Activated naive CD4-positive, alpha-beta T cell treated with anti-CD3 and anti-CD28 coated beads for 36 hours (primary cell): ENCODE measurements at regions of chr20 and their contacts with region 1.

Region 1: GRCh38 chr20:25057234-25058050 is 497 bp downstream of the ACSS1 start:
- DNase-seq: peak; percentile 88
- H3K4me3 Mint-ChIP-seq: peak overlapping the region; percentile 71
- H3K27ac Mint-ChIP-seq: peak overlapping the region; percentile 72
- H3K4me1 Mint-ChIP-seq: peaks cover 45% of the 10 kb centered on the region
- H3K27me3 Mint-ChIP-seq: no peaks in the 10 kb centered on the region

Region 2: DNA sequence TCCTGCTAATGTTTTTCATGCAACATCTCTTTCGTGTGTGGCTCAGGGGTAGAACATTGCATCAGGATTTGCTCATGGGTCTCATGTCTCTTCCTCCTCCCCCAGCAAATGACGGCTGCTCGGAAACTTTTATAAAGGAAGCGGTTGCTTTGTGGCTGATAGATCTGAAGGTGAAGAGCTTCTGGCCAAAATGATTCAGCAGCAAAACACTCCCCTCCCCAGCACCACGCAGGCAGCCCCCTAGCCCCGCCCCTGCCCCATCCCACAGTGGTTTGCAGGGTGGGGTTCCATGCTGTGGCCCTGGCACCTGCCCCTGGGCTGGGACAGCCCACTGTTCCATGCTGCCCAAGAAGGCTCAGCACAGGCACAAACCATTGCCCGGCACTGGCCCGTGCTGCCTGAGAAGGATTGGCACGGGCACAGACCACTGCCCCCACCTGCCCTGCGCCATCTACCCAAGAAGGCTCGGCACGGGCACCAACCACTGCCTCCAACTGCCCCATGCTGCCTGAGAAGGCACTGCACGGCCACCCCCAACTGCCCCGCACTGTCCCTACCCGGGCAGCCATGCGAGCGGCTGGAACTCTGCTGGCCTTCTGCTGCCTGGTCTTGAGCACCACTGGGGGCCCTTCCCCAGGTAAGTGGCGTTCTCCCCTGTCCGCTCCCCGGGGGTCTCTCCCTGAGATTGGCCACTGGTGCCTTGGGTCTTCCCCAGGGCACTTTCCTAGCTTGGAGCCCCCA is 108.3 kb before region 1 on chr20 and contains the start of gene CST7:
- CTCF ChIA-PET with region 1: interaction called, 3 read pairs
- intact Hi-C with region 1: loop called (anchors 1 kb)
- DNase-seq: peak; percentile 94
- H3K4me3 Mint-ChIP-seq: peak within 1 kb of the TSS; percentile 72
- H3K27ac Mint-ChIP-seq: peak within 1 kb of the TSS; percentile 96
- H3K4me1 Mint-ChIP-seq: peaks cover 40% of the 10 kb centered on the region
- H3K27me3 Mint-ChIP-seq: no peaks in the 10 kb centered on the region
- total RNA-seq, gene CST7: 37.8 to 43.1 TPM

Region 3: DNA sequence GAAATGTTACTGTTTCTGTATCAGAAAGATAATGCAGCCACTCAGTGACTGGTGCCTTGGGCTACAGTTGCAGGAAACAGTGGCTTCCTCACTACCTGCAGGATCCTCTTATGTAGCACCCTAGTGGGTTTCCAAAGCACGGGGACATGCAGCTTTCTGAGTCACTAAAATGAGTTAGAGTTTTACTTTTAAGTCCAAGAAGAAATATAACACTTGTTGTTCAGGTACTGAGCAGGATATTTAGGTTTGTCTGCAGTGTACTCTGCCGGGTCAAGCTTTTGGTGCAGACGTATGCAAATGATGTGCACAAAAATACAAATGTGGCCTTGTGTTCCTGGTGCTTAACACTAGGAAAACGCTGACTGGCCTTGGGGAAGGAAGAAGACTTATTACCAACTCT is 21.5 kb before region 1 on chr20:
- CTCF ChIA-PET with region 1: interaction called, 3 read pairs
- intact Hi-C with region 1: loop called (anchors 1 kb)
- DNase-seq: peak; percentile 55
- H3K4me3 Mint-ChIP-seq: peak overlapping the region; percentile 23
- H3K27ac Mint-ChIP-seq: peak overlapping the region; percentile 26
- H3K4me1 Mint-ChIP-seq: peaks cover 46% of the 10 kb centered on the region
- H3K27me3 Mint-ChIP-seq: no peaks in the 10 kb centered on the region

Region 4: DNA sequence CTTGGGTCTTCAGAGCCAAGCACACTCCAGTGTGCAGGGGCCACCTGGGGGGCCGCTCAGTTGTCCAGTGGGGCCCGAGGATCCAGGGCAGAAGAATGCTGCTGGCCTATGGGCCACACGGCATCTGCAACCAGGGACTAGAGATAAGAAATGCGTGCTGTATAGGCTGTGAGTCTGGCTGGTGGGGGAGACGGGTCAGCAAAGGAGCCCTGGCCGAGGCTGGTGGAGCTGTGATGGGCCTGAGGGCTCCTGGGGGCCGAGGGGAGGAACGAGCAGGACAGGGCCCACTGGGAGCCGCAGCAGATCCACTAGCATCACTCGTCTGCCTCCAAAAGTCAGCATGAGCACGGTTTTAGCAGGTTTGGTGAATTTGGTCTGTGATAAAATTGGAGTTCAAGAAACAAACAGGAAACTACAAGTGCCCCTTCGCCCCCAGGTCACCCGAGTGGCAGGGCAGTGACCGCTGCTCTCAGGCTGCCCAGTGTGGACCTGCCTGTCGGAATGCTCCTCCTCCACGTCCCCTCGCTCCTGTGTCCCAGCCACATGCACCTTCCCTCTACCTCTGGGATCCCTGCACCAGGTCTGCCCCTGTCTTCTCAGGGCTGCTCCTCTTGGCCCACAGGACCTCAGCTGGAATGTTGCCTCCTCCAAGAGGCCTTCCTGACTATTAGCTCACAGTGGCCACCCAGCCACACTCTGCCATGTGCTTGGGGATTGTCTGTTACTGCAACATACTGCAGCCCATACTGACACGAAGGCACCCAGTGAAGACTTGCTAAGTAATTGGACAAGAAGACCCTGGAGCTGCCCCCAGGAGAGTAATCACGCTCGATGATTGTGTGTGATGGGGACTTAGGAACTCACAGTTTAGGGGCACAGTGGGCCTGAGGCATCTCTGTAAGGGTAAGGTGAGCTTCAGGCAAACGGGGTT is 10.4 kb before region 1 on chr20:
- CTCF ChIA-PET with region 1: no interaction called
- intact Hi-C with region 1: no loop called
- DNase-seq: no peak
- H3K4me3 Mint-ChIP-seq: no peak overlapping the region
- H3K27ac Mint-ChIP-seq: no peak overlapping the region
- H3K4me1 Mint-ChIP-seq: peaks cover 28% of the 10 kb centered on the region
- H3K27me3 Mint-ChIP-seq: no peaks in the 10 kb centered on the region

Region 5: DNA sequence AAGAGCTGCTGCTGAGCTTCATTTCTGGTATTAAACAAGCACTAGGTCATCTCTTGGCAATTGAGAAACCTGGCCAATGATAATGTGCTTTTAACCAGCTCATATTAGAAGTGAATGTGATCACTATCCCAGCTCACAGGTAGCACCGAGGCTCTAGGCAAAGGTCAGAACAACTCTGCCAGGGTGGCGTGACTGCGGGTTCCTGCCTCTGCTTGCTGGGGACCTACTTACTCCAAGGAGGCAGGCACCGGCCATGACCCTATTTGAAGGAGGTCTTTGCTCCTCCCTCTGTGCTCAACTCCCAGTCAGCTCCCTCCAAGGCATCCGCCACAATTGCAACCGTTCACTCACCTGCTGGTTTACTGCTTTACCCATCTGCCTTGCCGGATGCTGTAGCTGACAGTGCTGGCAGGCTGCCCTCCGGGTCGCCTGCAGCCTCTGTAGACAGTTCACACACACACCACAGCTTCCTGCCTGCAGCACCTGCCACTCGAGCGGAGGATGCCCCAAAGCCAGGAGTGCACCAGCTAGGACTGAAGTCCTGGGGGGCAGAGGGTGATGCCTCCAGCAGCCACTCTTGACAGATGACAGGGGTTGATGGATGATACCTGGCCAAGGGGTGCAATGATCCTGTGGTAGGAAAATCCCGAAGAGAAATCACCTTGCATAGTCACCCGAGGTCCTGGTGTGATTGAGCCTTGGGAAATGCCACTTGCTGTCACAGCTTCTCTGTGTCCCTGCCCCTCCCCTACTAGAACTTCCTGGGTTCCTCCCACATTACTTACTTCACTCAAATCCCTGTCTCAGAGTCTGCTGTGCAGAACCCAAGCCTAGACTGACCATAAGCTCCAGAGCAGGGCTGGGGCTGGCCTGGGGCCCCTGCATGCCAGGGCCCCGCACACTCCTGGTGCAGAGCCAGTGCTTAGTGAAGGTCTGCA is 33.3 kb after region 1 on chr20:
- CTCF ChIA-PET with region 1: no interaction called
- intact Hi-C with region 1: loop called (anchors 1 kb)
- DNase-seq: peak; percentile 88
- H3K4me3 Mint-ChIP-seq: peak overlapping the region; percentile 41
- H3K27ac Mint-ChIP-seq: peak overlapping the region; percentile 44
- H3K4me1 Mint-ChIP-seq: peaks cover 28% of the 10 kb centered on the region
- H3K27me3 Mint-ChIP-seq: peaks cover 7% of the 10 kb centered on the region

Region 6: DNA sequence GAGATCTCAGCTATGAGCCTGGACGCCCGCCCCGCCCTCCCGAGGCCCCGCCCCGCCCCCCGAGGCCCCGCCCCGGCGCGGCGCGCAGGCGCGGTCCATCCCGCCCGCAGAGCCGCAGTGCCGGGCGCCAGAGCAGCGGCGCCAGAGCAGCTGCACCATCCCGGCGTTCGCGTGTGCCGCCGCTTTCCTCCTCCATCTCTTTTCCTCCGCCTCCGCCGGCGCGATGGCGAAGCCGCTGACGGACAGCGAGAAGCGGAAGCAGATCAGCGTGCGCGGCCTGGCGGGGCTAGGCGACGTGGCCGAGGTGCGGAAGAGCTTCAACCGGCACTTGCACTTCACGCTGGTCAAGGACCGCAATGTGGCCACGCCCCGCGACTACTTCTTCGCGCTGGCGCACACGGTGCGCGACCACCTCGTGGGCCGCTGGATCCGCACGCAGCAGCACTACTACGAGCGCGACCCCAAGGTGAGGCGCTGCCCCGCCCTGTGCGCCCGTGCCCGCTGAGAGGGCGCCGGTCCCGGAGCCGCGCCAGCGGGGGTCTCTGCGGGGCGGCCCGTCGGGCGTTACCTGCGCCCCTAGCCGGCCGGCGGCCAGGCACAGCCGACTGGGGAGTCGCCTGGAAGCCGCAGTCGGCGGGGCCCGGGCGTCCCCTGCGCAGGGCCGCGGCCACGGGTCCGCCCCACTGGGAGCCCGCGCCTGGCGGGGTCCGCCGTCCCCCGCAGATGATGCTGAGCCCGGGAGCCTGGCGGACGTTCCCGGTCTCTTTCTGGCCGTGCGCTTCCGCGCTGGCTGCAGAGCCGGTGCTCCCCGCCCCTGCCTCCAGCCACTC is 190.7 kb after region 1 on chr20 and contains the start of gene PYGB:
- CTCF ChIA-PET with region 1: interaction called, 3 read pairs
- intact Hi-C with region 1: loop called (anchors 2 kb)
- DNase-seq: peak; percentile 68
- H3K4me3 Mint-ChIP-seq: peak within 1 kb of the TSS; percentile 91
- H3K27ac Mint-ChIP-seq: peak within 1 kb of the TSS; percentile 82
- H3K4me1 Mint-ChIP-seq: peaks cover 57% of the 10 kb centered on the region
- H3K27me3 Mint-ChIP-seq: peaks cover 7% of the 10 kb centered on the region
- total RNA-seq, gene PYGB: 19.6 to 20.0 TPM